Astrocyte of the cerebellum (primary cell): ENCODE measurements at regions of chr1 and their contacts with region 1.

Region 1: DNA sequence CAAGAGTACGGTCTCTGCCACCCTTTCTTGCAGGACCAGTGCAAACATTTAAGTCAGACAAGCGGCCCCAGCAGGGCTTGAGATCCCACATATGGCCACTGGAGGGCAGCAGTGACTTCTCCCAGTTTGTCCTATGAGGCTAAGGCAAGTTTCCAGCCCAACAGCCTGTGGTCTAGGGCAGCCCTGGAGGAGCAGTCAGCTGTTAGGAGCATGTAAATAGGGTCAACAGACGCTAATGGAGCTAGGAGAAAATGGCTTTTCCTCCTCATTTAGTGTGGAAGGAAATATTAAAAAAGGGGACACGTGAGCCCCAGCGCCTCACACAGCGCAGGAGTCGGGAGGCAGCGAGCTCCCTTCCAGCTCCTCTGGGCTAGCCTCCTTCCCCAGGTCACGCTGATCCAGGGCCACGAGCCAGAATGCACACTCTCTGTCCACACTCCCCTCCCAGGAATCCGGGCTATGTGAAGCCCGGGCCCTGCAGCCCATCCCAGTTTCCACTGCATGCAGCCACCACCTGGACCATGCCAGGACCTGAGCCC is 95.6 kb downstream of the LAMC2 start:
- DNase-seq: peak; percentile 95
- H3K4me3 ChIP-seq: no peak overlapping the region
- CTCF ChIP-seq: peak; percentile 95

Region 2: GRCh38 chr1:182869241-182869666 is 412.4 kb before region 1 on chr1:
- in situ Hi-C with region 1: no loop called
- DNase-seq: no peak
- H3K4me3 ChIP-seq: no peak overlapping the region
- CTCF ChIP-seq: no peak

Region 3: DNA sequence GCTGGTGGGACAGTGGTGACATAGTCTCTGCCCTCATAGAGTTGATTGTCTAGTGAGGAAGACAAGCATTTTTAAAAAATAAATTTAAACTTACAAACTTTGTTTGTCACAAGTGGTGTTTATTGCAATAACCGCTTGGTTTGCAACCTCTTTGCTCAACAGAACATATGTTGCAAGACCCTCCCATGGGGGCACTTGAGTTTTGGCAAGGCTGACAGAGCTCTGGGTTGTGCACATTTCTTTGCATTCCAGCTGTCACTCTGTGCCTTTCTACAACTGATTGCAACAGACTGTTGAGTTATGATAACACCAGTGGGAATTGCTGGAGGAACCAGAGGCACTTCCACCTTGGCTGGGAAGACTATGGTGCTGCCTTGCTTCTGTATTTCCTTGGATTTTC is 37.2 kb before region 1 on chr1:
- in situ Hi-C with region 1: loop called (anchors 5 kb)
- DNase-seq: no peak
- H3K4me3 ChIP-seq: no peak overlapping the region
- CTCF ChIP-seq: no peak

Region 4: DNA sequence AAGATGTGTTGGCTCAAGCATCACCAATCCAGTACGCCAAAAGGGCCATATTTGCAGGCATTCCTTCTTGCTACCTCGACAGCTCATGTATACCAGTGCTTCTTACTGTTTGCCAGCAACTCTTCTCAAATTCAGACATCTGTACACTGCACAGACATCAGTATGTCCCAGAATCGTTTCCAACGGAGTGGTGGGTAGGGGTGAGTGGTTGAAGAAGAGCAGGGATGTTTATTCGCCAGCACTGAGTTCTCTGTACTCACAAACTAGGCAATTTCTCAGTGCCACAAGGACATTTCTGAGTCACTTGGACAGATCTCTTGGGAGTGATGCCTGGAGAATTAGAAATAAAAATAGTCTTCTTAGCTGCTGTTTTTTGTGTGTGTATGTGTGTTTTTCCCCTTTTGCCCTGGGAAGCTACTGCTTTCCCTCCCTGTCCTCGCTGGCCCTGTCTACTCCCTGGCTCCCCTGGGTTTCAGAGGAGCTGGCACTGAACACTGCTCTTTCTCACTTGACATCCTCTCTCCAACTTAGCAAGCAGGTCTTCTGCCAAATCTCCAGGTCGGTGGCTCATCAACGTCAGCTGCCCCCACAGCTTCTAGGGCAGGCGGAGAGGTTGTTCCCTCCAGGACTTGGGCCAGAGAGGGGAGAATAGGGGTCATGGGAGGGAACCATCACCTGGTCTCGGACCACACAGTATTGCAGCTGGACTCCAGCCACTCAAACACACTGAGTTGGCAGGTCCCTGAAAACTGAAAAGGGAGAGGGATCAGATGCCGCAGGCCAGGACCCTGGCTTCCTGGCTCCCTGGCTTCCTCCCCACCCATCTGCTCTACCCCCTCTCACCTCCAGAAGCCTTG is 46.0 kb after region 1 on chr1:
- in situ Hi-C with region 1: loop called (anchors 5 kb)
- DNase-seq: no peak
- H3K4me3 ChIP-seq: no peak overlapping the region
- CTCF ChIP-seq: no peak